Mammary epithelial cell (primary cell): ENCODE measurements at regions of chr11 and their contacts with region 1.

Region 1: GRCh38 chr11:46906609-46907041 is 11.7 kb downstream of the LRP4 start:
- DNase-seq: no peak
- H3K4me3 ChIP-seq: no peak overlapping the region
- H3K27ac ChIP-seq: no peak overlapping the region
- H3K4me1 ChIP-seq: no peaks in the 10 kb centered on the region
- H3K27me3 ChIP-seq: no peaks in the 10 kb centered on the region
- CTCF ChIP-seq: no peak

Region 2: DNA sequence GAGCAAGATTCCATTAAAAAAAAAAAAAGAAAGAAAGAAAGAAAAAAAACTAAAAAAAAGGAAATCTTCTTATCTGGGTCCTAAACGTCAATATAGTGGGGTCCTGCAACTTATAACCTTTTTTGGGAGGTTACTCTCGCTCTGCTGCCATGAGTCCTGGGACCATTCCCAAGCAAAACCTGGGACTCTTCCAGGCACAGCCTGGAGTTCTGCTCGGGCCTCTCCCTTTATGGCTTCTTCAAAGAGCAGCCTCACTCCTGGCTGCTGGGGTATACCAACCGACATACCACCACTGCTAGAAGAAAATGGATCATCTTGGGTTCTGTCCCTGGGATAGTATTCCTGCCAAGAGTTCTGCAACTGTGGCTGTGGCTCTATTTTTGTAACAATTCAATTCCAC is 46.4 kb before region 1 on chr11:
- CTCF ChIA-PET with region 1: no interaction called
- dilution Hi-C with region 1: loop called (anchors 5 kb)
- in situ Hi-C with region 1: no loop called
- intact Hi-C with region 1: no loop called
- DNase-seq: no peak
- H3K4me3 ChIP-seq: no peak overlapping the region
- H3K27ac ChIP-seq: no peak overlapping the region
- H3K4me1 ChIP-seq: no peaks in the 10 kb centered on the region
- H3K27me3 ChIP-seq: no peaks in the 10 kb centered on the region
- CTCF ChIP-seq: no peak